ENCODE measurements at regions of chr2 and their contacts with region 1.

Region 1: GRCh38 chr2:70086838-70087701 is at the start of gene PCBP1:
- DNase-seq: peak; percentile 92
- H3K4me3 Mint-ChIP-seq: peak within 1 kb of the TSS; percentile 98
- H3K27ac Mint-ChIP-seq: peak within 1 kb of the TSS; percentile 99
- H3K4me1 Mint-ChIP-seq: peaks cover 53% of the 10 kb centered on the region
- H3K27me3 Mint-ChIP-seq: no peaks in the 10 kb centered on the region
- total RNA-seq, gene PCBP1: 433 and 442 TPM in 2 replicates

Region 2: DNA sequence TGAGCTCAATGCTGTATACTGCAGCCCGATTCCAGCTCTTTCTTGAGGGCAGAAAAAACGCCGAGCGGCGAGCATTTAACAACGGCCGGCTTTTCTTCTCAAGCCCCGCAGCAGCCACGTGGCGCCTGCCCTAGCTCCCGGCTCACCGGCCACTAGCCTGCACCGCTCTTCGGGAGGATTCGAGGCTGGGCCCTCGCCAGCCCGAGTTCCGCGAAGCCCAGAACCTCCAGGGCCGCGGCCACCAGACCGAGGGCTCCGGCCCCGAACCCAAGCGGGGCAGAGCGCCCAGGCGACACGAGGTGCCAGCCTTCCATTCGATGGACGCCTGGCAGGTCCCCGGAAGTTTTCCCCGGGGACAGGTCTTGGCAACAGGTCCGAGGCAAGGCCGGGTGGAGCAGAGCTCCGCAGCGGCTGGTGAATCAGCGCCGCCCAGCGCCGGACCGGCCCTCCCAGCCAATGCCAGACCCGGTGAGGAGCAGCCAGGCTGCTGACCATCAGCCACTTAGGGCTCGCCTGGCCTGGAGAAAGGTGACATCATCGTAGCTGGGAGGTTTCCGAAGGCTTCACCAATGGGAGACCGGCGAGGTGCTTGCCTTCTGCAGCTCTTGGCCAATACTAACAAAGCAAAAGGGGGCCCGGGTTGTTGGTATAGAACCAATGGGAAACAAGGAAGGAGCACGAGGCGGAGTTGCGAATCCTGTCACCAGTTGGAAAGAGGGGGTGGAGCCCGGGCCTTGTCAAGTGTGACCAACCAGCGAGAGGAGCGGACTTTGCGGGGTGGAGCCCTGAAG is 172.7 kb before region 1 on chr2:
- intact Hi-C with region 1: loop called (anchors 1 kb)
- DNase-seq: peak; percentile 100
- H3K4me3 Mint-ChIP-seq: peak overlapping the region; percentile 83
- H3K27ac Mint-ChIP-seq: peak overlapping the region; percentile 91
- H3K4me1 Mint-ChIP-seq: peaks cover 36% of the 10 kb centered on the region
- H3K27me3 Mint-ChIP-seq: no peaks in the 10 kb centered on the region

Region 3: DNA sequence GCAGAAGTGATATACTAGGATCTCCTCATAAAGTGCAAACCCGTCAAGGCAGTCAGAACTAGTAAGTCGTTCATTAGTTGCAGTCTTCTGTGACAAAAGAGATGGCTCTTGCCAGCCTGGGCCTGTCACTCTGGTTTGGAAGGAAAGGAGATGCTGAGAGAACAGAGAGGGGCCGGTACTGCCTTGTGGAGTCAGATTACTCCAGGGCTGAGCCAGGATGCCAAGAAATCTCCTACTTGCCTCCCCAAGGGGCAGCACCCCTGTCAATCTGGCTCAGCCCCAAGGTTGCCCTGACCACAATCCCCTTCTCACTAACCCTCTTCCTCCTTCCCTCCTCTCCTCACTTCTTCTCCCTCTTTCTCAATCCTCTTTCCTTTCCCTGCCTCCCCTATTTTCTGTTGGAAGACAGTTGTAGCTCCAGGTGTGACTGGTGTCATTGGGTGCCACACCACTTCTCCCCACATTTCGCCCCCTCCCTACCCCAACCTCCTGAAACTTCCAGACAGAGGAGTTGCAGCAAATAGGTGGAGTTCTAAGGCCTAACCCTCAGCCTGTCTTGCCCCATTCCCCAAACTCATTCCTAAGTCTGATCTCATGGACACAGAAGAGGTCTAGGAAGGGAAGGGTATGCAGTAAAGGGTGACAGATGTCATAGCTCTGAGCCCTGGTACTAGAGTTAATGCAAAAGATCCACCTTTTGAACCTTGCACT is 62.6 kb before region 1 on chr2:
- intact Hi-C with region 1: no loop called
- DNase-seq: no peak
- H3K4me3 Mint-ChIP-seq: no peak overlapping the region
- H3K27ac Mint-ChIP-seq: no peak overlapping the region
- H3K4me1 Mint-ChIP-seq: peaks cover 3% of the 10 kb centered on the region
- H3K27me3 Mint-ChIP-seq: no peaks in the 10 kb centered on the region

Region 4: DNA sequence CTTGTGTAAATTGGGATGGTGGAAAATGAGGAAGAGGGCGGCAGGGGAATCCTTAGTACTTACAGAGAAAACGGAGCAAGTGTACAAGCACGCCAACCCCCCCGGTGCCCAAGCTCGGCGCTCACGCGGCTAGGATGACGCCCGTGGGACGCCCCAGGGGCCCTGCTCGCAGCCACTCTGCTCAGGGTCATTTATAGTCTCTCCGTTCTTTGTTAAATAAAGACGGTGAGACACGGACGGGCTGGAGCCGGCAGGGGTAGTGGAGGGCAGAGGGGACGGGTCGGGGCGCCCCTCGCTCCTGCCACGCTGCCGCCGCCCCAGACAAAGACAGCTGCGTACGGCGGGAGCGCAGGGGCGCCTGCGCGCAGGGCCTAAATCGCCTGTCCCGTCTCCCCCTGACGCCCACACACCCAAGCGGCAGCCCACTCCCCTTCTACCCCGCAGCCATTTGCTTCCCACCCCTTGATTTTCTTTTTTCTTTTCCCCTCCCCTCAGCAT is 38.0 kb after region 1 on chr2:
- intact Hi-C with region 1: loop called (anchors 1 kb)
- DNase-seq: peak; percentile 55
- H3K4me3 Mint-ChIP-seq: peak overlapping the region; percentile 90
- H3K27ac Mint-ChIP-seq: peak overlapping the region; percentile 98
- H3K4me1 Mint-ChIP-seq: peaks cover 57% of the 10 kb centered on the region
- H3K27me3 Mint-ChIP-seq: no peaks in the 10 kb centered on the region

Region 5: GRCh38 chr2:70137519-70137918 is 50.4 kb after region 1 on chr2:
- intact Hi-C with region 1: loop called (anchors 1 kb)
- DNase-seq: no peak
- H3K4me3 Mint-ChIP-seq: peak overlapping the region; percentile 70
- H3K27ac Mint-ChIP-seq: peak overlapping the region; percentile 89
- H3K4me1 Mint-ChIP-seq: peaks cover 63% of the 10 kb centered on the region
- H3K27me3 Mint-ChIP-seq: no peaks in the 10 kb centered on the region

Region 6: GRCh38 chr2:70248181-70248847 is 161.2 kb after region 1 on chr2 and contains the start of gene TIA1:
- intact Hi-C with region 1: loop called (anchors 5 kb)
- DNase-seq: peak; percentile 98
- H3K4me3 Mint-ChIP-seq: peak within 1 kb of the TSS; percentile 95
- H3K27ac Mint-ChIP-seq: peak within 1 kb of the TSS; percentile 98
- H3K4me1 Mint-ChIP-seq: peaks cover 22% of the 10 kb centered on the region
- H3K27me3 Mint-ChIP-seq: no peaks in the 10 kb centered on the region
- total RNA-seq, gene TIA1: 113 TPM in 2 replicates

Measured in activated T-helper 2 cell treated with anti-CD3 and anti-CD28 coated beads, Interferon-gamma antibody, Interleukin-2, Interleukin-4, amounts not matched to agents 10 μg/mL and 5 μg/mL and 100 μg/mL, durations not matched to agents 14 hours and 24 hours and 36 hours (primary cell).